CD8-positive, alpha-beta memory T cell (primary cell): ENCODE measurements at regions of chr10 and their contacts with region 1.

Region 1: DNA sequence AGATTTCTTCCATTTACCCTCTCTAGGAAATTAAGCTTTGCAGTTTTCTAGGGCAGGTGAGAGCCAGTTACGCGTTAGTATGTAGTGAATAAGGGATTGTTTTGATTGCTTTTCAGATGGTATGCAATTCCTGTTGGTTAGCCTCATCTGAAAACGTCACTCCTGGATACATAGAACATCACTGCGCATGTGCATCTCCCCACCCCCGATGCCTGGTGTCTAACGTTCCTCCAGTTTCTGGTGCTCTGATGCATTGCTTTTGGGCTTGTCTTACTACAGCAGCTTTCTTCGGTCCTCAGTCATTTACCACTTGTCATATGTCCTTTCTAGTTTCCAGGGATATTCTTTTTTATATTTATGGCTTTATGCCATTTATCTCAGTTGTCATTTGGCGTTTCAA is 22.5 kb downstream of the MLLT10 start:
- DNase-seq: no peak
- H3K4me3 ChIP-seq: no peak overlapping the region
- H3K4me3 Mint-ChIP-seq: no peak overlapping the region
- H3K27ac ChIP-seq: no peak overlapping the region
- H3K27ac Mint-ChIP-seq: peak overlapping the region in 2 of 8 donors; percentile 22 to 55
- H3K4me1 ChIP-seq: no peaks in the 10 kb centered on the region
- H3K4me1 Mint-ChIP-seq: peaks cover 23 to 49% (median 33%) of the 10 kb centered on the region in 3 donors
- H3K27me3 ChIP-seq: no peaks in the 10 kb centered on the region
- H3K27me3 Mint-ChIP-seq: no peaks in the 10 kb centered on the region

Region 2: DNA sequence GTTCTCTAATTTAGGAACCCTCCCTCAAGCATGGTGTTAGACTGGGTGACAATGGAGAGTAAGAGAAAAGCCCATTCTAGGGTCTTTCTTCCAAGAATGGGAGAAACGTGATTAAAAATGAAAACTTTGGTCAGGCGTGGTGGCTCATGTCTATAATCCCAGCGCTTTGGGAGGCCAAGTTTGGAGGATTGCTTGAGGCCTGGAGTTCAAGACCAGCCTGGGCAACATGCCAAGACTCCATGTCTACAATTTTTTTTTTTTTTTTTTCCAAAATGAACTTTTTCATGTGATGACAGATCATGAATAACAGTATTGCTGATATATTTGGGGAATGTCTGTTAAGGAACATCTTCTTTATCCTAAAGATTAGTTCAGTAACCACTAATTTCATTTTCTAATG is 172.1 kb after region 1 on chr10:
- CTCF ChIA-PET with region 1: no interaction called
- POLR2A ChIA-PET with region 1: interaction called, 10 read pairs
- DNase-seq: no peak
- H3K4me3 ChIP-seq: no peak overlapping the region
- H3K4me3 Mint-ChIP-seq: no peak overlapping the region
- H3K27ac ChIP-seq: no peak overlapping the region
- H3K27ac Mint-ChIP-seq: peak overlapping the region in 1 of 8 donors; percentile 26
- H3K4me1 ChIP-seq: peaks cover 12% of the 10 kb centered on the region
- H3K4me1 Mint-ChIP-seq: peaks cover 24 to 36% (median 36%) of the 10 kb centered on the region in 3 donors
- H3K27me3 ChIP-seq: no peaks in the 10 kb centered on the region
- H3K27me3 Mint-ChIP-seq: no peaks in the 10 kb centered on the region